Dendritic cell treated with granulocyte-macrophage colony-stimulating factor and Interleukin-4, amounts not matched to agents 40 ng/mL and 50 ng/mL, for 4 days (primary cell): ENCODE measurements at regions of chr1 and their contacts with region 1.

Region 1: GRCh38 chr1:247165674-247166073 is 6.1 kb downstream of the ZNF124 start:
- H3K4me3 Mint-ChIP-seq: no peak overlapping the region
- H3K27ac Mint-ChIP-seq: no peak overlapping the region
- H3K4me1 Mint-ChIP-seq: peaks cover 38% of the 10 kb centered on the region
- H3K27me3 Mint-ChIP-seq: no peaks in the 10 kb centered on the region

Region 2: DNA sequence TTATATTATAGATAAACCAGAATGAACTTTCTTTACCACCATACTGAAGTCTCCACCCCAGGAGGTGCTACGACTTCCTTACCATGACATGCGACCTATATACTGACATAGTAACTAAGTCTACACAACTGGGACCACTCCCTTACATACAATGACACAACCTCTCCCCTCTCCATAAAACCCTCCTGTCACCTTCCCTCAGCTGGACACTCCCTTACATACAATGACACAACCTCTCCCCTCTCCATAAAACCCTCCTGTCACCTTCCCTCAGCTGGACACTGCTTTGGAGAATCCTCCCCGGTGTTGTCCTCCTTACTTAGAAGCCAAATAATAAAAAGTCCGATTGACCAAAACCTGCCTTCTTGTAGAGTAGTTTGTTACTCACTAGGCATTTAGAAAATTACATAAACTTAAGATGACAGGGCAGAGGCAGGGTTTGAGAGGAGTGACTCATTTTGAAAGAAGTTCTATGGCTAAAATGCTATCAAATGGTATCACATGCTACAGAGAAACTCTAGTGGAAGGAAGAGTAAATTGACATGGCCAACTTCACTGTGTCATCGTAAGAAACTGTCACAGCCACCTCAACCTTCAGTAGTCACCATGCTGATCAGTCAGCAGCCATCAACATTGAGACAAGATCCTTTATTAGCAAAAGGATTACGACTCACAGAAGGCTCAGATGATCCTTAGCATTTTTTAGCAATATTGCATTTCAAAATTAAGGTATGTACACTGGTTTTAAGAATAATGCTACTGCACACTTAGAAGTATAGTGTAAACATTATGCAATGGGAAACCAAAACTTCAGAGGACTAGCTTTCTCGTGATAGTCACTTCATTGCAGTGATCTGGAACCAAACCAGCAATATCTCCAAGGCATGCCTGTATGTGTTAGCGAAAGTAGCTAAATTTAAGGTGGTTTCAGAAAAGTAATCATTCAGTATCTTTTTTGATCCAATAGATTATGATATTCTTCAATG is 290.3 kb before region 1 on chr1:
- intact Hi-C with region 1: no loop called
- H3K4me3 Mint-ChIP-seq: no peak overlapping the region
- H3K27ac Mint-ChIP-seq: no peak overlapping the region
- H3K4me1 Mint-ChIP-seq: no peaks in the 10 kb centered on the region
- H3K27me3 Mint-ChIP-seq: no peaks in the 10 kb centered on the region

Region 3: GRCh38 chr1:247043406-247043805 is 122.3 kb before region 1 on chr1:
- intact Hi-C with region 1: loop called (anchors 10 kb)
- H3K4me3 Mint-ChIP-seq: no peak overlapping the region
- H3K27ac Mint-ChIP-seq: no peak overlapping the region
- H3K4me1 Mint-ChIP-seq: no peaks in the 10 kb centered on the region
- H3K27me3 Mint-ChIP-seq: no peaks in the 10 kb centered on the region

Region 4: DNA sequence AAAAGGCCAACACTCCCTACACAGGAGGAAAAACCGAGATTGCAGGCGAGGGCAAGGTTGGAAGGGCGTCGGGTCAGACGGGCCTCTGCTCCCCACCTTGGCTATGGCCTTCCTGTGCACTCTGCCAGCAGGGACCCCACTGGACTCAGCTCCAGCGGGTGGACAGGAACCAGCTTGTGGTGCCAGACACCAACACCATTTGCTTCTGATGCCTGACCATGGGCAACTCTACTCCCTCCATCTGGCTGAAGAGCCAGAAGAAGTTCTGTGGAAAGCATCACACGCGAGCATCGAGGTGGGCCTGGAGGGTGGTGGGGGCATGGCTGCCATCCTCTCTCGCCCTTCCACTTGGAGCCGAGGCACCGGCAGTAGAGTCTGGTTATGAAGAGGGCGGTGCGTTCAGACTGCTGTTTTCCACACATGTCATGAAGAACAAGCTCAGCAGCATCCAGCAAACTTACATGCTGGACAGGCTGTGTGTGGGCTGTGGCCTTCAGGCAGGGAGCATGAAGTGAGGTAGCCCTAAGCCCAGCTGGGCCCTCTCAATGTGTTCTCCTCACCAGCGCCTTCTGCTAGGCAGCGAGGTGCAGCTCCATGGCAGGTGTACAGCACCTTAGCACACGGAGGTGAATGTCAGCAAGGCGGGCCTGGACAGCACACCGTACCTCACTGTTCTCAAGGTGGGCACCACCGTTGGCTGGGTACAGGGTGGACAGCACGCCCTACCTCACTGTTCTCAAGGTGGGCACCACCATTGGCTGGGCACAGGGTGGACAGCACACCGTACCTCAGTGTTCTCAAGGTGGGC is 45.9 kb before region 1 on chr1:
- intact Hi-C with region 1: loop called (anchors 5 kb)
- H3K4me3 Mint-ChIP-seq: no peak overlapping the region
- H3K27ac Mint-ChIP-seq: no peak overlapping the region
- H3K4me1 Mint-ChIP-seq: peaks cover 5% of the 10 kb centered on the region
- H3K27me3 Mint-ChIP-seq: peaks cover 12% of the 10 kb centered on the region

Region 5: GRCh38 chr1:247204177-247204647 is 38.5 kb after region 1 on chr1:
- intact Hi-C with region 1: no loop called
- H3K4me3 Mint-ChIP-seq: no peak overlapping the region
- H3K27ac Mint-ChIP-seq: no peak overlapping the region
- H3K4me1 Mint-ChIP-seq: peaks cover 20% of the 10 kb centered on the region
- H3K27me3 Mint-ChIP-seq: no peaks in the 10 kb centered on the region

Region 6: GRCh38 chr1:247401310-247402119 is 235.8 kb after region 1 on chr1:
- intact Hi-C with region 1: no loop called
- H3K4me3 Mint-ChIP-seq: no peak overlapping the region
- H3K27ac Mint-ChIP-seq: peak overlapping the region; percentile 86
- H3K4me1 Mint-ChIP-seq: peaks cover 54% of the 10 kb centered on the region
- H3K27me3 Mint-ChIP-seq: no peaks in the 10 kb centered on the region